Calu3 (cell line): ENCODE measurements at regions of chr17 and their contacts with region 1.

Region 1: DNA sequence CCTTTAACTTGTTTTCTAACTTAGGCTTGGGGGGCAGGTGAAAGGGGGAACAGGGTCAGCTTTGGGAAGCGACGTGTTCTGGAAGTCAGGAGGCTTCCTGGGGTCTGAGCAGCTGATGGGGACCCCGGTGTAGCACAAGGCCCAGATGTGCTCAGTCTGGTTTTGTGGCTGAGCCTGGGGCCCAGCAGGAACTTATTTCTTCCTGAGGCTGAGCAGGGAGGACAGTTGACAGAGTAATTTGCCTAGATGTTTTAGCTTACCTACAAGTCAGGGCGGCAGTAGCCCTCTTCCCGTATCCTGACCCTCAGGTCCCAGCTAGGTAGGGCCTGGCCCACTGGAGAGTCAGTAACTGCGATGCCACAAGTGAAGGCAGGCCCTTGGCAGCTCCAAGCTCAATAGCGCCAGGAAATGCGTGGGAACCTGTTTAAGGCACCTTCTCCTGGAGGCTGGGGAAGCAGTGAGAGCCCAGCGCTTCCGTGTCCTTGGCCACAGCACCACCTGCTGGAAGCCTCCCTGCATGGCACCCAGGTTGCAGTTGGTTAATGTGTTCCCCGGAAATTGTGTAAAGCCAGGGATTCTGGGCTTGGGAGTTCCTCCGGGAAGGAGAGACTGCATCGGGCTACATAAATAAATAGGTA is 5.2 kb downstream of the CCR7 start:
- DNase-seq: peak; percentile 100
- H3K4me3 Mint-ChIP-seq: peak overlapping the region; percentile 47
- H3K27ac Mint-ChIP-seq: no peak overlapping the region
- H3K4me1 Mint-ChIP-seq: peaks cover 17% of the 10 kb centered on the region
- H3K27me3 Mint-ChIP-seq: peaks cover 99% of the 10 kb centered on the region
- CTCF ChIP-seq: no peak

Region 2: DNA sequence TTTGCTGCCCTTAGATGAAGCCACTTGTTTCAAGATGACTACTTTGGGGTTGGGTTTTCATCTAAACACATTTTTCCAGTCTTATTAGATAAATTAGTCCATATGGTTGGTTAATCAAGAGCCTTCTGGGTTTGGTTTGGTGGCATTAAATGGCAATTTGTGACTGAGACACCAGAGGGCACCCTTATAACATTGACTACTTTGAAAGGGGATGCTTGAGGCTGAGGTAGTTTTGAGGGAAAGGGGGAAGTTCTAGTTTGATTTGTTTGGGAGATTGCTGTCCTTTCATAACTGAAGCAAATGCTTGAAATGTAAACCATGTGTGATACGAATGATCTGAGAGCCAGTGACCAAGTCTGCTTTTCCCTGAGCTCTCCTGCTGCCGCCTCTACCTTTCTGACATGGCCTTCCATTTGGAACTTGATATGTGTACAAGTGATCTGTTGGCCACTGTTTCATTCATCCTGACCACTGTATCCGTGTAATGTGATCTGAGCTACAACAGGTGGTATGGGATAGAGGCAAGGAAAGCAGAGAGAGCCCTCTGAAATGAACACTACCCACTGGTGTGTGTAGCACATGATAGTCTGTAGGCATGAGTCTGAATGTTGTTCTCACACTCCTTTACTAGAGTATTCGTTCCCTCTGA is 256.9 kb before region 1 on chr17:
- CTCF ChIA-PET with region 1: interaction called, 10 read pairs
- intact Hi-C with region 1: loop called (anchors 2 kb)
- DNase-seq: peak; percentile 94
- H3K4me3 Mint-ChIP-seq: no peak overlapping the region
- H3K27ac Mint-ChIP-seq: peak overlapping the region; percentile 26
- H3K4me1 Mint-ChIP-seq: peaks cover 34% of the 10 kb centered on the region
- H3K27me3 Mint-ChIP-seq: no peaks in the 10 kb centered on the region
- CTCF ChIP-seq: peak; percentile 99

Region 3: GRCh38 chr17:40331743-40332641 is 228.1 kb before region 1 on chr17:
- CTCF ChIA-PET with region 1: no interaction called
- intact Hi-C with region 1: no loop called
- DNase-seq: peak; percentile 87
- H3K4me3 Mint-ChIP-seq: peak overlapping the region; percentile 15
- H3K27ac Mint-ChIP-seq: peak overlapping the region; percentile 3
- H3K4me1 Mint-ChIP-seq: peaks cover 71% of the 10 kb centered on the region
- H3K27me3 Mint-ChIP-seq: no peaks in the 10 kb centered on the region
- CTCF ChIP-seq: peak; percentile 47

Region 4: DNA sequence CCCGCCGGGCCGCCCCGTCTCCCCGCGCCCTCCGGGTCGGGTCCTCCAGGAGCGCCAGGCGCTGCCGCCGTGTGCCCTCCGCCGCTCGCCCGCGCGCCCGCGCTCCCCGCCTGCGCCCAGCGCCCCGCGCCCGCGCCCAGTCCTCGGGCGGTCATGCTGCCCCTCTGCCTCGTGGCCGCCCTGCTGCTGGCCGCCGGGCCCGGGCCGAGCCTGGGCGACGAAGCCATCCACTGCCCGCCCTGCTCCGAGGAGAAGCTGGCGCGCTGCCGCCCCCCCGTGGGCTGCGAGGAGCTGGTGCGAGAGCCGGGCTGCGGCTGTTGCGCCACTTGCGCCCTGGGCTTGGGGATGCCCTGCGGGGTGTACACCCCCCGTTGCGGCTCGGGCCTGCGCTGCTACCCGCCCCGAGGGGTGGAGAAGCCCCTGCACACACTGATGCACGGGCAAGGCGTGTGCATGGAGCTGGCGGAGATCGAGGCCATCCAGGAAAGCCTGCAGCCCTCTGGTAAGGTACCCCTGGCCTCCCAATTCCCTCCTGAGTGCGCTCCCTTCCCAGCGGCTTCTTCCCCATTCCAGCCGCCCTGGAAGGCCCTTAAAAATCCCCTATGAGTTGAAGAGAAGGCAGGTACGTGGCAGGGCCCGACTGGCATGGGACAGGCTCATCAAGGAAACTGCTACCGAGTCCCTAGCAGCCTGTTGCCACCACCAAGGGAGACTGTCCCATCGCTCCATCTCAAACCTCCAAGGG is 116.3 kb before region 1 on chr17:
- CTCF ChIA-PET with region 1: interaction called, 4,142 read pairs
- intact Hi-C with region 1: loop called (anchors 1 kb)
- DNase-seq: peak; percentile 100
- H3K4me3 Mint-ChIP-seq: peak overlapping the region; percentile 1
- H3K27ac Mint-ChIP-seq: no peak overlapping the region
- H3K4me1 Mint-ChIP-seq: peaks cover 35% of the 10 kb centered on the region
- H3K27me3 Mint-ChIP-seq: peaks cover 37% of the 10 kb centered on the region
- CTCF ChIP-seq: no peak

Region 5: GRCh38 chr17:40499551-40500174 is 60.4 kb before region 1 on chr17:
- CTCF ChIA-PET with region 1: interaction called, 59 read pairs
- intact Hi-C with region 1: no loop called
- DNase-seq: peak; percentile 100
- H3K4me3 Mint-ChIP-seq: peak overlapping the region; percentile 33
- H3K27ac Mint-ChIP-seq: no peak overlapping the region
- H3K4me1 Mint-ChIP-seq: peaks cover 20% of the 10 kb centered on the region
- H3K27me3 Mint-ChIP-seq: peaks cover 82% of the 10 kb centered on the region
- CTCF ChIP-seq: no peak

Region 6: DNA sequence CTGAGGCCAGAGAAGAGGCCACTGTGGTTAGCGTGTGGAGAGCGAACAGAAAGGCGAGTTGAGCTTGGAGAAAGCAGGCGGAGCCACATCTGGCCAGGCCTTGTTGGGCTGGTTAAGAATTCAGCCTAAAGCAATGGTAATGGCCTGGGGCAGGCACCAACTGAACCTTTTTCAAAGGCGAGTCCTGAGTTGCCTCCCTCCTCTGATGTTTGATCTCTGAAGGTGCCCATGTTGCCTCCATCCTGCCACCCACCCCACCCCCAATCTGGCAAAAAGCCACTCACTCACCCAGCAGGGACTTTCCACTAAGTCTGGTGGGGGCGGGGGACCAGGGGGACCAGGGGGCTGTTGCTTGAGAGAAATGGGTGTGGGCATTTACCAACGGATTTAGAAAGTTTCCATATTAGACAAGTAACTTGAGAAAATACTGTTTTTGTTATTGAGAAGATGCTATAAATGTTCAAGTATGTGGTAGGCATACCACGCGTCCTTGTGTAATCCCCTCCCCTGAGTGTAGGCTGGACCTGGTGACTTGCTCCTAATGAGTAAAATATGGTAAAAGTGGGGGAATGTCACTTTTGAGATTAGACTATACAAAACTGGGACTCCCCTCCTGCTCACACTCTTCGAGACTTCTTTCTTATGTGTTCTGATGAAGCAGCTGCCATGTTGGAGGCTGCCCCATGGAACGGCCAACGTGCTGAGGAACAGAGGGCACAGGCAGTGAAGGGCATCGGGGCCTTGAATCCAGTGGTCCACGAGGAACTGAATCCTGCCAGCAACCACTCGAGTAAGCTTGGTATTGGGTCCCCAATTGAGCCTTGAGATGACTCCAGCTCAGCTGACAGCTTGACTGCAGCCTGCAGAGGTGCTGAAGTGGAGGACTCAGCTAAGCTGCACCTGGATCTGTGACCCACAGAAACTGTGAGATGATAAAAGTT is 28.8 kb before region 1 on chr17:
- CTCF ChIA-PET with region 1: interaction called, 1,743 read pairs
- intact Hi-C with region 1: loop called (anchors 1 kb)
- DNase-seq: no peak
- H3K4me3 Mint-ChIP-seq: no peak overlapping the region
- H3K27ac Mint-ChIP-seq: no peak overlapping the region
- H3K4me1 Mint-ChIP-seq: peaks cover 19% of the 10 kb centered on the region
- H3K27me3 Mint-ChIP-seq: peaks cover 48% of the 10 kb centered on the region
- CTCF ChIP-seq: no peak

Region 7: DNA sequence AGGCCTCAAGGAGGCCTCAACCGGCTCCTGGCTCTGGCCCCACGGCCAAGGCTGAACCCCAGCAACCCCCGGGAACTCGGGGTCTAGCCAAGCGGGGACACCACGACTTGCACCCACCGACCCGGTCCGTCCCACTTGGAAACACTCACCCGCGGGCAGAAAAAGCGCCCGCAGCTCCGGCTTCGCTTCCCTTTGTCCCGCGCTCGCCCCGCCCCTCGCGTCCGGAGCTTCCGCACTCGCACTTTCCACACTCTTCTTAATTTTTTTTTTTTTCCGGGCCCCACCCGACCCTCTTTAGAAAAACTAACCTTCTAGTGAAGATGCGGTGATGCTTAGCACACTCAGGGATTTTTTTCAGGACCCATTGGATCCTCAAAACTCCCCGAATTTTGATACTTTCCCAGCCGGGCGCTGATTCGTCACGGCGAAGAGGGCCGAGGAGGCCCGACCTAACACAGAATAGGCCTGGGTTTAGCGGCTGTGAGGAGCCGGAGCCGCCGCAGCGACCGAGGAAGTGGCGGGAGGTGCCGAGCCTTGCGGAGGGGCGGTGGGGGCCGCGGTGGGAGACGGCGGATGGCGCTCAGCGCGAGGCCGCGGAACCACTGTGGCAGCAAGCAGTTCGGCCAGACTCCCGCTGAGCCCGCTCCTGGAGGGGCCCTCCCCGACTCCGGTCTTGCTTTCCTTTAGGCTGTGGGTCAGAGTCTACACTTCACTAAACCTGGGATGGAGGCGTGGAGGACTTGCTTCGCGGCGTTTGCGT is 87.7 kb after region 1 on chr17 and contains the start of gene SMARCE1:
- CTCF ChIA-PET with region 1: interaction called, 10 read pairs
- intact Hi-C with region 1: no loop called
- DNase-seq: peak; percentile 98
- H3K4me3 Mint-ChIP-seq: peak within 1 kb of the TSS; percentile 74
- H3K27ac Mint-ChIP-seq: peak within 1 kb of the TSS; percentile 87
- H3K4me1 Mint-ChIP-seq: peaks cover 29% of the 10 kb centered on the region
- H3K27me3 Mint-ChIP-seq: no peaks in the 10 kb centered on the region
- CTCF ChIP-seq: no peak
- total RNA-seq, gene SMARCE1: 755 and 768 TPM in 2 replicates